Esophagus muscularis mucosa (tissue), 4 donors: ENCODE measurements at regions of chrX and their contacts with region 1.

Region 1: DNA sequence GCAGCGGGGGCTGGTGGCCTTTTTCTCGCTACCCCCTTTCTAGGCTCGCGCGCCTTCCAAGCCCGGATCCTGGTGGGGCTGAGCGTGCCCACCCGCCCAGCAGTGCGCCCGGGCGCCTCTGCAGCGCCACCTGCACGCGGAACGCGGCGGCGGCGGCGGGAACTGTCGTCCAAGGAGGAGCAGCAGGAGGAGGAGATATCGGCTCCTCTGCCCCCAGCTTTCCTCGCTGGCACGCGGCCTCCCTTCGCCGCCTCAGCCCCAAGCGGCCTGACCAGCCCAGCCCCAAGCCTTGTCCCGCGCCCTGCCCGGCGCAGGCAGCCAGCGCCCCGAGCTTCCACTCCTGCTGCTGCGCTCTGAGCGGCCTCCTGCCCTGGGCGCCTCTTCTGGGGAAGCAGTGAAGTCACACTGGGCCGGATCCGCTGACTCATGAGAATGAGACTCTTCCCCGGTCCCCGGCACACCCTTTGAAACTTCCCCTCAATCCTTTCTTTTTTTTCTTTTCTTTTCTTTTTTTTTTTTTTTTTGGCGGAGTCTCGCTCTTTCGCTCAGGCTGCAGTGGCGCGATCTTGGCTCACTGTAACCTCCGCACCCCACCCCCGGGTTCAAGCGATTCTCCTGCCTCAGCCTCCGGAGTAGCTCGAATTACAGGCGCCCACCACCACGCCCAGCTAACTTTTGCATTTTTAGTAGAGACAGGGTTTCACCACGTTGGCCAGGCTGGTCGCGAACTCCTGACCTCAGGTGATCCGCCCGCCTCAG is 10.6 kb upstream of the ELF4 start:
- DNase-seq: no peak
- H3K4me3 ChIP-seq: peak overlapping the region; percentile 38 to 59 (median 48)
- H3K27ac ChIP-seq: peak overlapping the region; percentile 72 to 79 (median 74)
- H3K4me1 ChIP-seq: peaks cover 7 to 39% (median 34%) of the 10 kb centered on the region in 4 donors
- H3K27me3 ChIP-seq: no peaks in the 10 kb centered on the region
- CTCF ChIP-seq: peak; percentile 64 to 80 (median 65)
- EP300 ChIP-seq: no peak
- POLR2A ChIP-seq: no peak

Region 2: GRCh38 chrX:130079824-130080406 is 41.0 kb before region 1 on chrX:
- intact Hi-C with region 1: loop called (anchors 5 kb)
- DNase-seq: no peak
- H3K4me3 ChIP-seq: no peak overlapping the region
- H3K27ac ChIP-seq: no peak overlapping the region
- H3K4me1 ChIP-seq: peaks cover 10 to 22% (median 14%) of the 10 kb centered on the region in 4 donors
- H3K27me3 ChIP-seq: no peaks in the 10 kb centered on the region
- CTCF ChIP-seq: peak; percentile 64 to 71 (median 67)
- EP300 ChIP-seq: no peak
- POLR2A ChIP-seq: no peak

Region 3: DNA sequence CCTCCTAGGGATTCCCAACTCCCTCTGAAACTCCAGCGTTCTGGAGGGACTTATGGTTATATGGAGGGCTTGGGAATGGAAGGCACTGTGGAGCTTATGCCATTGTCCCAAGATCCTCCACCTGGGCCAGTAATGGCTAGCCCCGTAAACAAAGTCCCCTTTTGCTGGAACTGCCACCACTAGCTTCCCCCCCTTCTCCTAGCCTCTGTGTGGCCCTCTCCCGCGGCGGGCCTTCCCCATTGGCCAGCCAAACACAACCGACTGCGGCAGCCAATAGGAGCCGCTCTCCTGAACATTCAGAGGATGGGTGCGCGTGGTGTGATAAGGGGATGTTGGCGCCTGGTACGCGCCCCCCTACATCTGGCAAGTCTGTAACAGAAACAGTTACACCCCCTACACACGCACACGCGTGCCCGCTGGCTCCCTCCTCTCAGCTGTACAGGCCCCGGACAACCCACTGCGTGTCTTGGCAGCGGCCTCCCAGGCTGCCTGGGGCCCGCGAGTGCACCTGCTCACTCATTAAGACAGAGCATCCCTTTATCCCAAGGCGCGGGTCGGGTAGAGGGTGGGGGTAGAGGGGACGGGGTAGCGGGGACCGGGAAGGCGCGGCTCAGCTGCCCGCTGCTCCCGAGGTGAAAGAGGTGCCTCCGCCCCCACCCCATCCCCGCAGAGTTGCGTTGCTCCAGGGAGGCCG is 50.0 kb after region 1 on chrX:
- intact Hi-C with region 1: loop called (anchors 5 kb)
- DNase-seq: no peak
- H3K4me3 ChIP-seq: peak overlapping the region; percentile 50 to 62 (median 53)
- H3K27ac ChIP-seq: no peak overlapping the region
- H3K4me1 ChIP-seq: peaks cover 4 to 39% (median 35%) of the 10 kb centered on the region in 4 donors
- H3K27me3 ChIP-seq: peaks cover 0 to 7% (median 0%) of the 10 kb centered on the region in 4 donors
- CTCF ChIP-seq: no peak
- EP300 ChIP-seq: no peak
- POLR2A ChIP-seq: no peak

Region 4: GRCh38 chrX:130190801-130191200 is 69.9 kb after region 1 on chrX:
- intact Hi-C with region 1: loop called (anchors 5 kb)
- DNase-seq: no peak
- H3K4me3 ChIP-seq: no peak overlapping the region
- H3K27ac ChIP-seq: no peak overlapping the region
- H3K4me1 ChIP-seq: no peaks in the 10 kb centered on the region
- H3K27me3 ChIP-seq: no peaks in the 10 kb centered on the region
- CTCF ChIP-seq: no peak
- EP300 ChIP-seq: no peak
- POLR2A ChIP-seq: no peak

Region 5: DNA sequence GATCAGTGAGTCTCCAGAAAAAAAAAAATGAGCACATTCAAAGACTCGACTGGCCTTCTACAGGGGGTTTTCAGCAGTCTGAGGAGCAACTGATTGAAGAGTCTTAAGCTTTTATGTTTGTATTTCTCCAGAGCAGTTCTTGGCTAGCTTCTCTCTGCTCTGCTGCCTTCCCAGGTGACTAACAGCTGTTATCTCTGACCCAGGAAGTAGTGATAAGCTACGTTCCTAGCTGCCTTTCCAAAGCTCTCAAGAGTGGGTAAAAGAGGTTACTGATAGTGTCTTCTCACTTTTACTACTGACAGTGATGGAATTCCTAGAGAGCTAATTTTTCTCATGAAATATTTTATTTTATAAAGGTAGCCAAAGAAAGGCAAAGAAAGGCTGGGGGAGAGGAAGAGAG is 715.5 kb after region 1 on chrX:
- intact Hi-C with region 1: no loop called
- DNase-seq: no peak
- H3K4me3 ChIP-seq: no peak overlapping the region
- H3K27ac ChIP-seq: no peak overlapping the region
- H3K4me1 ChIP-seq: no peaks in the 10 kb centered on the region
- H3K27me3 ChIP-seq: no peaks in the 10 kb centered on the region
- CTCF ChIP-seq: no peak
- EP300 ChIP-seq: no peak
- POLR2A ChIP-seq: no peak